ENCODE measurements at regions of chr1 and their contacts with region 1.

Region 1: DNA sequence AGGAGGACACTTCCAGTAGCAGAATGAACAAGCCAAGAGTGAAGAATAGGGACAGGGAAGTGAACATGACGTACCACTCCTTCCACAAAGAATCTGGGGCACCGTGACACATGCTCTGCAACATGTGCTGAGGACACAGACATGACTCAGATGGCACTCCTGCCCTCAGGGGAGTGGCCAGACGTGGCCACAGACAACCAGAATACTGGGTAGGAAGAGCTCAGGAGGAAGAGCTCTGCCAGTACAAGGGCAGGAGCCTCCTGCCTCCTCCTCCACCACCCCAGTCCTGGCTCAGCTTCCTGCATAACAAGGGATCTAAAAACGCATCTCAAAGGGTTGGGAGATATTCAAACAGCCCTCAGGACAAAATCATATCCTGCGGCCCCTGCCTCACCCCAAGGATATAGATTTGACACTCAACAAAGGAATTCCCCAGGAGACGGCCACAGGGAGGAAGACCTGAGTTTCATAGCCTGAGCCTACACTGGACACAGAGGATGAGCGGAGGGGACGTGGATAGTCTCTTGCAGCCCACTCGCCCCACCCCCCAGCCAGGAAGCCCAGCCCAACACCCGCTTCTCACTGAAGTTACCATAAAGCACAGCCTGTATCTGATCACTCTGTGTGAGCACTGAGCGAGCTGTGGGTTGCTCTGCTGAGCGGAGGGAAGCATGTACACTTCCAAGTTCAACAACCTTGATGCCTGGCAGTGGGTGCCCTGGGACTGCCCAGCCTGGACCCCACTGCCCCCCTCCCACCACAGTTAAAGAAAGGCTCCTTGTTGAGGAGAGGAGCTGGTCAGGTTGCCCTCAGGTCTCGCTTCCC is 102.3 kb downstream of the TRABD2B start:
- DNase-seq: peak; percentile 87 to 89
- ATAC-seq: peak; percentile 95 to 96
- H3K4me3 ChIP-seq: no peak overlapping the region
- H3K27ac ChIP-seq: peak overlapping the region; percentile 67 to 89 (median 72)
- H3K4me1 ChIP-seq: peaks cover 8 to 47% of the 10 kb centered on the region in 2 donors
- H3K27me3 ChIP-seq: no peaks in the 10 kb centered on the region
- CTCF ChIP-seq: no peak
- POLR2A ChIP-seq: peak; percentile 60 to 69

Region 2: GRCh38 chr1:47388891-47389238 is 506.1 kb before region 1 on chr1:
- in situ Hi-C with region 1: no loop called
- intact Hi-C with region 1: no loop called
- DNase-seq: peak; percentile 5 to 29
- ATAC-seq: peak; percentile 27 to 64
- H3K4me3 ChIP-seq: no peak overlapping the region
- H3K27ac ChIP-seq: no peak overlapping the region
- H3K4me1 ChIP-seq: peaks cover 0 to 4% of the 10 kb centered on the region in 2 donors
- H3K27me3 ChIP-seq: peaks cover 0 to 14% (median 9%) of the 10 kb centered on the region in 3 donors
- CTCF ChIP-seq: peak in 3 of 5 experiments; percentile 50 to 67 (median 60)
- POLR2A ChIP-seq: no peak

Region 3: GRCh38 chr1:48019714-48020315 is 124.9 kb after region 1 on chr1:
- in situ Hi-C with region 1: no loop called
- intact Hi-C with region 1: loop called (anchors 2 kb)
- DNase-seq: peak; percentile 83 to 94
- ATAC-seq: peak; percentile 95 to 97
- H3K4me3 ChIP-seq: no peak overlapping the region
- H3K27ac ChIP-seq: peak overlapping the region; percentile 64 to 77 (median 76)
- H3K4me1 ChIP-seq: peaks cover 0 to 14% of the 10 kb centered on the region in 2 donors
- H3K27me3 ChIP-seq: no peaks in the 10 kb centered on the region
- CTCF ChIP-seq: no peak
- POLR2A ChIP-seq: no peak

Measured in gastrocnemius medialis (tissue), 4 donors.